Right ventricle myocardium superior (tissue), 1 donor: ENCODE measurements at regions of chr16 and their contacts with region 1.

Region 1: GRCh38 chr16:89330177-89330856 is 112.8 kb downstream of the ZNF778 start:
- DNase-seq: peak; percentile 62
- ATAC-seq: peak; percentile 2

Region 2: DNA sequence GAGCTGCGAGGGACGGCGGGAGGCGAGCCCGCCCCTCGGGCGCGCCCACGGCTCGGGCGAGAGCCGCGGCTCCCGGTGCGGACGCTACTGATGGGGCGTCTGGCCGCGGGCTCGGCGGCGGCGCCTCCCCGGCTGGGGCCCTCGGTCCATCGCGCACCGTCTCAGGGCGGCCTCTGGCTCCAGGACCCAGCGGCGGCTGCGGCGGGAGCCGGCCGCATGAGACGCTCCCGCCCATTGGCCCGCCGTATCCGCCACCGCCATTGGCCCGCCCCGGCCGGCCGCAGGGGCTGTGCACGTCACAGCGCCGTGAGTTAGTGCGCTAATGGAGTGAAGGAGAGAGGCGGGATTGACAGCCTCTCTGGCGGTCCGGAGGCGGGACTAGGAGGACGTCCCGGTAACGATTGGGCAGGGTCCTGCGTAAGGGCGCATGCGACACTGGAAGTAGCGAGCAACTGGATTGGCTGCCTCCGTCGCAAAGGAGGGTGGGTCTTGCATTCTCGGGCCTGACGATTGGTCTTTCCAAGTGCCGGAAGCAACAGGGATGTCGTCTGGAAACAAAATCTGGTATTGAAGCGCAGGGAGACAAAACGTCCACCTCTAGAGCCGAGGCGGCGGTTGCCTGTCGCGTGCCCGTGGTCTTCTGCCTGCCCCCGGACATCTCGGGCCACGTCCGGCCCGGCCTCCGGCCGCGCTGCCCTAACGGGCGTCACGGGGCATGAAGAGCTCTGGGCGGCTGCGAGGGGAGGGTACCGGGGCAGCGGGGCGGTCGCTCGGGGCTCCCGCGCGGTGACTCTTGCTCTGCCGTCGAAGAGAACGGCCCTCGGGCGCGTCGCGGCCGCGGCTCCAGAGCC is 160.3 kb after region 1 on chr16 and contains the start of gene ANKRD11:
- intact Hi-C with region 1: loop called (anchors 5 kb)
- DNase-seq: peak; percentile 99
- ATAC-seq: peak; percentile 97
- total RNA-seq, gene ANKRD11: 64.9 TPM

Region 3: GRCh38 chr16:89507834-89508590 is 177.7 kb after region 1 on chr16 and contains the start of gene SPG7:
- intact Hi-C with region 1: loop called (anchors 5 kb)
- DNase-seq: peak; percentile 91
- ATAC-seq: peak; percentile 94
- total RNA-seq, gene SPG7: 108 TPM

Region 4: DNA sequence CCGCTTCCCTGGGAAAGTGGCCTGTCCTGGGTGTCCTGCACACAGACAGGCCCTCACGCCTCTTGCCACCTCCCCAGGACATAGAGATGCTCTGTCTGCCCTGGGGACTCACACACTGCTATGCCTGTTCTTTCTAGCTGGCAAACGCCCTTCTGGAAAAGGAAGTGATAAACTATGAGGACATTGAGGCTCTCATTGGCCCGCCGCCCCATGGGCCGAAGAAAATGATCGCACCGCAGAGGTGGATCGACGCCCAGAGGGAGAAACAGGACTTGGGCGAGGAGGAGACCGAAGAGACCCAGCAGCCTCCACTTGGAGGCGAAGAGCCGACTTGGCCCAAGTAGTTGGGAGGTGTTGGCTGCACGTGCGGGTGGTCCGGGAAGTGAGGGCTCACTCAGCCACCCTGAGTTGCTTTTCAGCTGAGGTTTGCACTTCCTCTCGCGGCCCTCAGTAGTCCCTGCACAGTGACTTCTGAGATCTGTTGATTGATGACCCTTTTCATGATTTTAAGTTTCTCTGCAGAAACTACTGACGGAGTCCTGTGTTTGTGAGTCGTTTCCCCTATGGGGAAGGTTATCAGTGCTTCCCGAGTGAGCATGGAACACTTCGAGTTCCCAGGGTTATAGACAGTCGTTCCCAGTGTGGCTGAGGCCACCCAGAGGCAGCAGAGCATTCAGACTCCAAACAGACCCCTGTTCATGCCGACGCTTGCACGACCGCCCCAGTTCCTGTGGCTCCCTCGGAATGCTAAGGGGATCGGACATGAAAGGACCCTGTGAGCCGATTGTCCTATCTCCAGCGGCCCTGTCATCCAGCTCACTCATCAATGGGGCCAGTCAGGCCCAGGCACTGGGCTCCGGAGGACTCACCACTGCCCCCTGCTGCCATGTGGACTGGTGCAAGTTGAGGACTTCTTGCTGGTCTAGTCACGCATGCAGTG is 226.7 kb after region 1 on chr16:
- intact Hi-C with region 1: loop called (anchors 10 kb)
- DNase-seq: peak; percentile 90
- ATAC-seq: peak; percentile 33